ENCODE measurements at regions of chr11 and their contacts with region 1.

Region 1: DNA sequence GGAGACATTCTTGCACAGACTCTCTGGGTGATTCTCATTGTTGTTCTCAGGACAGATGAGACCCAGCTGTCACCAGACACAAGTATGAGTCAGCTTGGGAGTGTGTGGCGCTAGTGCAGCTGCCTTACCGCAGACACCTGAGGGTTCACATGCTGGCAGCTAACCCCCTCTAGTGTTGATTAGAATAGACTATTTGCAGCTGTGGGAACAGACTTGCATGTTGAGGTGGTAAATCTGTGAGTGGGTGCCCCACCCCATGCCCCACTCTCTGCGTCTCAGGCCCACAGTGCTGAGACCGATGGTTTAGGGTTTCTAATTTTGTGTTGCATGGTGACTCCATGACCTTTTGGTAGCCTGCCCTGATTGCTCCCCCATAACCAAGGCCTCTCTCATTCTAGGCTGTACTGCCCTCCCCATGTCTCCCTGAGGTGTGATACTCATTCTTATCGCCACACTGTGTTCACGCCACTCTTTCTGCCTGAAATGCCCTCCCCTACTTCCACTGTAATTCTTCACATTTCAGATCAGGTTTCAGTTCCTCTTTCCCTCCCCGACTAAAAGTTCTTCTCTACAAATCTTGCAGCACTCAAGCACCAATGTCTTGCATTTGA is 73.7 kb upstream of the KIRREL3 start:
- DNase-seq: no peak
- H3K4me3 ChIP-seq: no peak overlapping the region
- H3K27ac ChIP-seq: no peak overlapping the region
- H3K4me1 ChIP-seq: no peaks in the 10 kb centered on the region
- H3K27me3 ChIP-seq: no peaks in the 10 kb centered on the region
- CTCF ChIP-seq: no peak

Region 2: GRCh38 chr11:126874831-126875230 is 199.4 kb before region 1 on chr11:
- intact Hi-C with region 1: no loop called
- DNase-seq: no peak
- H3K4me3 ChIP-seq: no peak overlapping the region
- H3K27ac ChIP-seq: no peak overlapping the region
- H3K4me1 ChIP-seq: no peaks in the 10 kb centered on the region
- H3K27me3 ChIP-seq: no peaks in the 10 kb centered on the region
- CTCF ChIP-seq: no peak

Region 3: DNA sequence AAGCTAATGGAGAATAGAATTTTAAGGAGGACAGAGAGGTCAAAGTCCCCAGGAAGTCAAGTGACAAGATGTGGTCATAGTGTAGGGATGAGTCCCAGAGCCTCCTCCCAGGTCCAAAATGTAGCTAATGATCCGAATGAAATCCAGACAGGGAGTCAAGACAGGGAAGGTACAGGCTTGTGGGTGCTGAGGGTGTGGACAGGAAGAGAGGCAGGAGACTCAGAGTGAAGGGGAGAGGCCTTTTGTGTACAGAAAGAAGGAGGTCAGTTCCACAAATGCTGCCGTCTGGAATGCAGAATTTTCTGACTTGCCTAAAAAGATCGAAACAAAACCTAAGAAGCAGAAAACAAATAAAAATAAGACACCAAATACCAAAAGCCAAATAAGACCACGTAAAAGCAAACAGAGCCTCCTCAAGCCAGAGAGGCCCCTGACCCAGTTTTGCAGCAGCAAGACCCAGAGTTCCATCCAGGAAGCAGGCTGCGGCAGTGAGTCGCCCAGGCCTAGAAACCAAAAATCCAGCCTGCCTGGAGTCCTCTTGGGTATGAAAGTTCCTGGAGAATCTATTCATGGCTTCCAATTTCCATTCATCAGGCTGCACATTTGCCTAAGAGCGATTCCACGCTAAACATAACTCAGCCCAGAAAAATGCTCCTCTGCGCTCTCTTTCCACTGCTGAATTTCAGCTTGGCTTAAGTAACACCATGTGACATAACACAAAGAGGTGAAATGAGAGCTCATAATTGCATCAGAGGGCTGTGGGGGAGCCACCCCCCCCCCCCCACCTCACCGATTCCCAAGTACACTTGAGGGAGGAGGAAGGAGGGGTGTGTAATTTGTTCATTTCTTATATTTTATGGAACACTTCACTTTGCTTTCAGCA is 144.8 kb before region 1 on chr11:
- intact Hi-C with region 1: no loop called
- DNase-seq: no peak
- H3K4me3 ChIP-seq: no peak overlapping the region
- H3K27ac ChIP-seq: no peak overlapping the region
- H3K4me1 ChIP-seq: no peaks in the 10 kb centered on the region
- H3K27me3 ChIP-seq: no peaks in the 10 kb centered on the region
- CTCF ChIP-seq: no peak

Region 4: GRCh38 chr11:127056338-127056971 is 17.8 kb before region 1 on chr11:
- intact Hi-C with region 1: loop called (anchors 1 kb)
- DNase-seq: no peak
- H3K4me3 ChIP-seq: no peak overlapping the region
- H3K27ac ChIP-seq: no peak overlapping the region
- H3K4me1 ChIP-seq: no peaks in the 10 kb centered on the region
- H3K27me3 ChIP-seq: no peaks in the 10 kb centered on the region
- CTCF ChIP-seq: no peak

Measured in ascending aorta (tissue), 2 donors.